GM12878 (cell line): ENCODE measurements at regions of chr5 and their contacts with region 1.

Region 1: DNA sequence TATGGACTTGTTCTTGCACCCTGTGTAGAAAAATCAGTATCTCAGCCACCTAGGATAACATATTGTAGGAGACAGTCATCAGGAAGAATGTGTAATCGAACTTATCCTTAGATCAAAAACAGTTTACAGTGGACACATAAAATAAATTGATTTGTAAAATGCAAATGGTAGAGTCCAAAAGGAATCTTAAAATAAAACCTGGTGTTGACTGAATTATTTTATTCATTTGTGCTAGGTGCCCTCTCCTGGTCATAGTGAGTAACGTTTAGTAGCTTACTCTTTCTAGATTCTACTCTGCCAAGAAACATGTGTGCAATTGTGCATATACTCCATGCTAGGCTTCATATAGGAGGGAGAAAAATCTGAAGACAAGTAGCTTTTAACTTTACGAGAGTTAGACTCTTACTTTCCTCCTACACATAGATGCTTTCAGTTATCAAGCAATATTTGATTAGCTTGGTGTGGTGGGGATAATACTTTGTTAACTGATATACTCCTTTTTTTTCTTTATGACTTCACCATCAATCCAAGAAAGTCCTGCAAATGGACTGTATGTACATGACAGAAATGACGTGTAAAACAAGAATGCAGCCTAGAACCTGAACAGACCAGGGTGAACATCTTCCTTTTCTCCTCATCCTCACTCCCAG is 23.7 kb upstream of the LOX start:
- DNase-seq: no peak
- ATAC-seq: peak; percentile 83
- H3K4me3 ChIP-seq: no peak overlapping the region
- H3K27ac ChIP-seq: no peak overlapping the region
- H3K4me1 ChIP-seq: no peaks in the 10 kb centered on the region
- H3K27me3 ChIP-seq: no peaks in the 10 kb centered on the region
- CTCF ChIP-seq: peak; percentile 47 to 54 (median 50)
- EP300 ChIP-seq: no peak
- POLR2A ChIP-seq: no peak
- RAD21 ChIP-seq: peak; percentile 75

Region 2: DNA sequence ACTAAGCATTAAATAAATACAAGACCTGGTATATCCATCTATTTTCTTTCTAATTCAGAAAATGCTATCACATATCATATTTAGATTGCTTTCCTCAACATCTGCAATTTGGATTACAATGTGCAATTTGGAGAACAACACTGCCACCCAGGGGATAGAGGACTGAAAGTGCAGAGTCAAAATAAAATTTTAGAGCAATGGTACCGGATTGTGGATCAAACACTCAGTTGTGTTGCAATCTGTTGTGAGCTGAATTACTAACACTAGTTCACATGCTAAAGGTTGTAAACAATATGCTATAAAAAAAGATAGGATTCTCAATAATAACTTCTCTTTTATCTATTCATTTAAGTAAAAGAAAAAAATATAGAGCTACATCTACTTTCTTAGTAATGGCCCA is 151.9 kb before region 1 on chr5:
- CTCF ChIA-PET with region 1: interaction called, 10 read pairs
- POLR2A ChIA-PET with region 1: no interaction called
- RAD21 ChIA-PET with region 1: interaction called, 3 read pairs
- SMC1A ChIA-PET with region 1: no interaction called
- in situ Hi-C with region 1: no loop called
- intact Hi-C with region 1: no loop called
- DNase-seq: no peak
- ATAC-seq: peak; percentile 60
- H3K4me3 ChIP-seq: no peak overlapping the region
- H3K27ac ChIP-seq: no peak overlapping the region
- H3K4me1 ChIP-seq: no peaks in the 10 kb centered on the region
- H3K27me3 ChIP-seq: no peaks in the 10 kb centered on the region
- CTCF ChIP-seq: peak; percentile 41 to 68 (median 49); a peak in 5 of 6 replicates
- EP300 ChIP-seq: no peak
- POLR2A ChIP-seq: no peak
- RAD21 ChIP-seq: peak; percentile 79

Region 3: DNA sequence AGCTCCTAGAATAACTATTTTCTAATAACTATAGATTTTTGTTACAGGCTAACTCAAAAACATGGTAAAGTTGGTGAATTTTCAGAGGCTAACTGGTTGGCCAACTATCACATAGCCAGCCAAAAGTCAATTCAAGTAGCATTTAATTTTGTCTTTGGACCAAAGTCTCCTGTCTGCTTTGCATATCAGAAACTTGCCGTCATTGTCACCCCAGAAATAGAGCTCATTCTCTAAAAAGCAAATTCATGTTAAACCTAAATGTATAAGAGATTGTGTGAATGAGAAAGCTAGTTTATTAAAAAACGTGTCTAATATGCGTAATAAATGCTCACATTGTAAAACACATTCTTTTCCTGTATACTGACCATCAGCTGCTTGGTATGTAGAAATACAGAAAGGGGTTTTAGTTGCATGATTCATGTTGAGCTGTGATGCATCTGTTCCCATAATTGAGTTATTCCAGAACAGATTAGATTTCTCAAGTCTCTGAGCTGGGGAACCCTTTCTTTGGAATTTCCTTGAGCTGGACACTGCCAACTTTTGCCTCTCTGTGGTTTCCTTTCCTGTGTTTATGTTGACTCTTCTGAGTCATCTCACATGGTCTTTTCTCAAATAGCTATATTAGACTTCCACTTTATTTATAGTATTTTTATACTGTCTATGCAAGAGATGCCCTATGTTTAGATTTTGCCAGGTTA is 132.7 kb before region 1 on chr5:
- CTCF ChIA-PET with region 1: interaction called, 15 read pairs
- POLR2A ChIA-PET with region 1: interaction called, 5 read pairs
- RAD21 ChIA-PET with region 1: interaction called, 12 read pairs
- SMC1A ChIA-PET with region 1: interaction called, 11 read pairs
- in situ Hi-C with region 1: no loop called
- intact Hi-C with region 1: loop called (anchors 2 kb)
- DNase-seq: no peak
- ATAC-seq: peak; percentile 60
- H3K4me3 ChIP-seq: no peak overlapping the region
- H3K27ac ChIP-seq: no peak overlapping the region
- H3K4me1 ChIP-seq: peaks cover 3% of the 10 kb centered on the region; the same call in 1 of the 2 replicates
- H3K27me3 ChIP-seq: no peaks in the 10 kb centered on the region
- CTCF ChIP-seq: no peak
- EP300 ChIP-seq: no peak
- POLR2A ChIP-seq: no peak
- RAD21 ChIP-seq: no peak

Region 4: DNA sequence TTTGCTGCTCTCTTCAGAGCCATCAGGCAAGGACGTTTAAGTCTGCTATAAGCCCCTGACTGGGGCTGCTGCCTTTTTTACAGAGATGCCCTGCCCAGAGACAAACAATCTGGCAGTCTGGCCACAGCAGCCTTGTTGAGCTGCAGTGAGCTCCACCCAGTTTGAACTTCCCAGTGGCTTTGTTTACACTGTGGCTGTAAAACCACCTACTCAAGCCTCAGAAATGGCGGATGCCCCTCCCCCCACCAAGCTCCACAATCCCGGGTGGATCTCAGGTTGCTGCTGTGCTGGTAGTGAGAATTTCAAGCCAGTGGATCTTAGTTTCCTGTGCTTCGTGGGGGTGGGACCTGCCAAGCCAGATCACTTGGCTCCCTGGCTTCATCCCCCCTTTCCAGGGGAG is 150.6 kb after region 1 on chr5:
- CTCF ChIA-PET with region 1: no interaction called
- POLR2A ChIA-PET with region 1: no interaction called
- RAD21 ChIA-PET with region 1: no interaction called
- SMC1A ChIA-PET with region 1: no interaction called
- in situ Hi-C with region 1: no loop called
- intact Hi-C with region 1: no loop called
- DNase-seq: no peak
- ATAC-seq: no peak
- H3K4me3 ChIP-seq: no peak overlapping the region
- H3K27ac ChIP-seq: no peak overlapping the region
- H3K4me1 ChIP-seq: no peaks in the 10 kb centered on the region
- H3K27me3 ChIP-seq: no peaks in the 10 kb centered on the region
- CTCF ChIP-seq: no peak
- EP300 ChIP-seq: no peak
- POLR2A ChIP-seq: no peak
- RAD21 ChIP-seq: no peak

Region 5: GRCh38 chr5:122295138-122295537 is 193.4 kb after region 1 on chr5:
- CTCF ChIA-PET with region 1: no interaction called
- POLR2A ChIA-PET with region 1: no interaction called
- RAD21 ChIA-PET with region 1: no interaction called
- SMC1A ChIA-PET with region 1: no interaction called
- in situ Hi-C with region 1: no loop called
- intact Hi-C with region 1: no loop called
- DNase-seq: no peak
- ATAC-seq: peak; percentile 82
- H3K4me3 ChIP-seq: no peak overlapping the region
- H3K27ac ChIP-seq: no peak overlapping the region
- H3K4me1 ChIP-seq: peaks cover 12% of the 10 kb centered on the region
- H3K27me3 ChIP-seq: no peaks in the 10 kb centered on the region; a peak in 1 of 4 replicates
- CTCF ChIP-seq: peak; percentile 36 to 46 (median 38); a peak in 4 of 6 replicates
- EP300 ChIP-seq: no peak
- POLR2A ChIP-seq: no peak
- RAD21 ChIP-seq: peak; percentile 29; the same call in 1 of the 2 replicates